ENCODE measurements at regions of chr10 and their contacts with region 1.

Region 1: GRCh38 chr10:130169136-130169859 is 33.1 kb downstream of the GLRX3 start:
- DNase-seq: no peak
- H3K4me3 ChIP-seq: no peak overlapping the region
- H3K27ac ChIP-seq: no peak overlapping the region
- H3K4me1 ChIP-seq: no peaks in the 10 kb centered on the region
- H3K27me3 ChIP-seq: no peaks in the 10 kb centered on the region
- CTCF ChIP-seq: no peak
- EP300 ChIP-seq: no peak
- POLR2A ChIP-seq: no peak
- RAD21 ChIP-seq: no peak

Region 2: DNA sequence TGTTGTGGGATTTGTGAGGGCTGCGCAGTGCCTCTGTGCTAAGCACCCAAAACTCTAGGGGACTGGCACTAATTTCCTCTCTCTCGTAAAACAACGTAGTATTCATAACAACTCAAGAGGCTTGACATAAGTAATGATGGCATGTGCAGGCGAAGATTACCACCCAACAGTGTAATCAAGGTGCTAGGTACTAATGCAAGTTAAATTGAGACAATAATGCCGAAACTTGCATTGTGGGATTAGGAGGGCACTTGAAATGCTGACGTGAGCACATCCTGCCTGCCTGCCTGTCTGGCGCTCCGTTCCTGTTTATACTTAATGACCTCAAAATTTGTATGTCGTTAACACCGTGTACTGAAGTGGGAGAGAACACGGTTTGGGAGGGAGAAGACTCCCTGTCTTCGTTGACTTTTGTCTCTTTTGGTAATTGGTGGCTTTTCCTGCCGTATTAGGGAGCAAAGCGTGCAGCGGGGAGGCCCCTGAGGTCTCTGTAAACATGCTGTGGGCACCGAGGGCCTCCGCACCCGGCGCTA is 563.2 kb before region 1 on chr10:
- CTCF ChIA-PET with region 1: no interaction called
- POLR2A ChIA-PET with region 1: no interaction called
- DNase-seq: no peak
- H3K4me3 ChIP-seq: no peak overlapping the region
- H3K27ac ChIP-seq: no peak overlapping the region
- H3K4me1 ChIP-seq: peaks cover 0 to 5% (median 1%) of the 10 kb centered on the region in 4 experiments; a peak in 1 of 7 replicates
- H3K27me3 ChIP-seq: no peaks in the 10 kb centered on the region
- CTCF ChIP-seq: no peak
- EP300 ChIP-seq: no peak
- POLR2A ChIP-seq: no peak
- RAD21 ChIP-seq: no peak

Region 3: DNA sequence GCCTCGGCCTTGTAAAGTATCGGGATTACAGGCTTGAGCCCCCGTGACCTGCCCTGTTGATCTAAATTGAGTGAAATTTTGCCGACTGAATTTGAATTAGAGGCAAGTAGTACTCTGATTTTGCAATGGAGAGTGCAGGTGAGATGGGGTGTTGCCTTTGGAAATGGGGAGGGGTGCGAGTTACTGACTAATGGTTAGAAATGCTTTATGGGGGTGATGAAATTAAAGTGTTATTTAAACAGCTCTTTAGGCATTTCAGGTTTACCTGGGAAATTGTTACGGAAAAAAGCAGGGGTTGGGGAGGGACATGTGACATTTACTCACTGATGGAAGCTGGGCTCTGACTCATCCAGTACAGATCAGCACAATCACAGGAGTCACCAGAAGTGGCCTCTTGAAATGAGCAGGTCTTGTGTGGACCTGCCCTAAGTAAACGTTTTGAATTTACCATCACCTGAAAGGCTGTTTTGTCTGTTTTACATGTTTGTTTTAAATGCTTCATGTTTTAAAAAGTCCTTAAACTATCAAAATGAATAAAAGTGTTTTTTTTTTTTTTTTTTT is 30.9 kb before region 1 on chr10:
- CTCF ChIA-PET with region 1: no interaction called
- POLR2A ChIA-PET with region 1: no interaction called
- DNase-seq: no peak
- H3K4me3 ChIP-seq: no peak overlapping the region
- H3K27ac ChIP-seq: no peak overlapping the region
- H3K4me1 ChIP-seq: peaks cover 2 to 7% (median 4%) of the 10 kb centered on the region in 4 experiments; a peak in 5 of 7 replicates
- H3K27me3 ChIP-seq: 0 out of 7 replicates have a peak, but pooled peaks cover 0 to 4% (median 0%) of the 10 kb centered on the region in 4 experiments
- CTCF ChIP-seq: no peak
- EP300 ChIP-seq: no peak
- POLR2A ChIP-seq: no peak
- RAD21 ChIP-seq: no peak

Region 4: GRCh38 chr10:130179640-130180039 is 10.3 kb after region 1 on chr10:
- CTCF ChIA-PET with region 1: interaction called, 13 read pairs
- POLR2A ChIA-PET with region 1: no interaction called
- DNase-seq: no peak
- H3K4me3 ChIP-seq: no peak overlapping the region
- H3K27ac ChIP-seq: no peak overlapping the region
- H3K4me1 ChIP-seq: no peaks in the 10 kb centered on the region
- H3K27me3 ChIP-seq: no peaks in the 10 kb centered on the region
- CTCF ChIP-seq: peak in 2 of 3 experiments; percentile 57 to 73; a peak in 3 of 4 replicates
- EP300 ChIP-seq: no peak
- POLR2A ChIP-seq: no peak
- RAD21 ChIP-seq: peak; percentile 86 to 89

Measured in H1 (cell line).